ENCODE measurements at regions of chr2 and their contacts with region 1.

Region 1: GRCh38 chr2:219206442-219207253 is at the start of gene ZFAND2B:
- DNase-seq: peak; percentile 87 to 91 (median 88)
- H3K4me3 ChIP-seq: peak within 1 kb of the TSS; percentile 78 to 85 (median 83)
- H3K4me3 Mint-ChIP-seq: peak within 1 kb of the TSS; percentile 86 to 98
- H3K27ac ChIP-seq: peak within 1 kb of the TSS; percentile 79 to 91
- H3K27ac Mint-ChIP-seq: peak within 1 kb of the TSS; percentile 87 to 96 (median 92)
- H3K4me1 ChIP-seq: peaks cover 19 to 21% of the 10 kb centered on the region in 2 donors
- H3K4me1 Mint-ChIP-seq: peaks cover 39% of the 10 kb centered on the region
- H3K27me3 ChIP-seq: no peaks in the 10 kb centered on the region
- H3K27me3 Mint-ChIP-seq: peaks cover 2 to 3% (median 2%) of the 10 kb centered on the region in 3 donors
- CTCF ChIP-seq: no peak
- polyA plus RNA-seq, gene ZFAND2B: 45.7 to 98.9 (median 53.2) TPM

Region 2: GRCh38 chr2:219160186-219161017 is 46.2 kb before region 1 on chr2 and contains the start of gene NHEJ1:
- intact Hi-C with region 1: loop called (anchors 2 to 5 kb)
- DNase-seq: peak; percentile 85 to 92 (median 89)
- H3K4me3 ChIP-seq: peak within 1 kb of the TSS; percentile 60 to 87 (median 80)
- H3K4me3 Mint-ChIP-seq: peak within 1 kb of the TSS; percentile 93
- H3K27ac ChIP-seq: peak within 1 kb of the TSS; percentile 71 to 81
- H3K27ac Mint-ChIP-seq: peak within 1 kb of the TSS; percentile 87 to 97 (median 95)
- H3K4me1 ChIP-seq: peaks cover 15 to 18% of the 10 kb centered on the region in 2 donors
- H3K4me1 Mint-ChIP-seq: peaks cover 17% of the 10 kb centered on the region
- H3K27me3 ChIP-seq: no peaks in the 10 kb centered on the region
- H3K27me3 Mint-ChIP-seq: peaks cover 0 to 5% (median 2%) of the 10 kb centered on the region in 3 donors
- CTCF ChIP-seq: peak; percentile 99
- polyA plus RNA-seq, gene NHEJ1: 12.6 to 20.9 (median 20.3) TPM

Region 3: DNA sequence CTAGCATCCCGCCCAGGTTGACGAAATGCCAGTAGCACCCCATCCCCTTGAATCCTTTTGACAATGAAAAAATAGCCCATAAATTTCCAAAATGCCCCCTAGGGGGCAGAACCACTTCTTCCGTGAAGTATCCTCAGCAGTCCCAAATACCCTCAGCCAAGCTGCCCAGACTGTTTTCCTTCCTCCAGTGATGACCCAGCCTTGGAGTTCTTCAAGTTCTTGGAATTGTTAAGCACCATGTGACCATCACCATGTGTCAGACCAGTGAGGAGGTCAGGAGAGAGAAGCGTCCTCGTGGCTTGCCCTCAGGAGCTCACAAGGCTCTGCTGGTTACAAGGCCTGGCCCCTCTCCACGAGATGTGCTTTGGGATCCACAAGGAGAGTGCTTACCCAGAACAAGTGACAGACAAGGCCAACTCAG is 35.4 kb before region 1 on chr2:
- intact Hi-C with region 1: loop called in 1 of 2 experiments (anchors 2 kb)
- DNase-seq: peak in 2 of 3 donors; percentile 33 to 54
- H3K4me3 ChIP-seq: no peak overlapping the region
- H3K4me3 Mint-ChIP-seq: no peak overlapping the region
- H3K27ac ChIP-seq: peak overlapping the region; percentile 18 to 66
- H3K27ac Mint-ChIP-seq: peak overlapping the region in 4 of 7 donors; percentile 48 to 84 (median 73)
- H3K4me1 ChIP-seq: peaks cover 12 to 21% of the 10 kb centered on the region in 2 donors
- H3K4me1 Mint-ChIP-seq: peaks cover 37% of the 10 kb centered on the region
- H3K27me3 ChIP-seq: no peaks in the 10 kb centered on the region
- H3K27me3 Mint-ChIP-seq: peaks cover 0 to 4% (median 2%) of the 10 kb centered on the region in 3 donors
- CTCF ChIP-seq: peak; percentile 87

Measured in CD14-positive monocyte (primary cell).